H1 (cell line): ENCODE measurements at regions of chr1 and their contacts with region 1.

Region 1: DNA sequence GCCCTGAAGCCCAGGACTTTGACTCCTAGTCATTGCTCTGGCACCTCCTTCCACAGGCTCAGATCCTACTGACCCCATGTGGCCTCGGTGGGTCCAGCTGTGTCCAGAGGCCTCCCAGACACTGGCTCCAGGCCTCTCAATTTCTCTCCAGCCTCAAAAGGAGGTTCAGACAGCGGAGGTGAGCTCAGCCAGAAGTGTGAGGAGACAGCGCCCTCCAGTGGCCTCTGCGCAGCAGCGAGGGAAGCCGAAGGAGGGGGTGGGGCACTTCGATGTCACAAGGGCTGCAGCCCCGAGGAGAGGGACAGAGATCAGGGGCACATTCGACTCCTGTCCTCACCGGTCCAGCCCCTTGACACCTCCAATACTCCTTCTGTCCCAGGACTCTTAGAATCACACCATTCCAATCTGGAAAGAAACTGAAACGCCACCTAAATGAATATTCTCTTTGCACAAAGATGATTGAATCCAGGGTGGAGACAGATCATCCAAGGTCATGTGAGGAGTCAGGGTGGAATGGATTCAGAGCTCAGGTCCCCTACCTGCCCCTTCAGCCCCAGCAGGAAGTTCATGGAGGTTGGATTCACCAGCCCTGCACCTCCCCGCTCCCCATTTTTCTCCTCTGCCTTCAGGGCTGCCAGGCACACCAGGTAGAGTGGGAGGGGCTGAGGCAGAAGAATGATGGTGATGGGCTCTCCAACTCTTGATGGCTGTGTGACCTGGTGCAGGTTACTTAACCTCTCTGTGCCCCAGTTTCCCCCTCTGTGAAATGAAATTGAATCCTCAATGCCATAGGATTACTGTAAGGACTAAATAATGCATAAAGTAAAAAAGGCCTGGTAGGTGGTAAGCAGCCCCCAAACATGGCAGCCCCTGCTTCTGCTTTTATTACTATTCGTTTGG is 34.8 kb upstream of the ZBTB40 start:
- DNase-seq: peak; percentile 53 to 95
- H3K4me3 ChIP-seq: peak overlapping the region in 3 of 4 experiments; percentile 12 to 32 (median 26); a peak in 3 of 8 replicates
- H3K27ac ChIP-seq: no peak overlapping the region
- H3K4me1 ChIP-seq: peaks cover 3 to 12% (median 5%) of the 10 kb centered on the region in 4 experiments; a peak in 5 of 7 replicates
- H3K27me3 ChIP-seq: no peaks in the 10 kb centered on the region
- CTCF ChIP-seq: peak; percentile 91 to 99 (median 98)
- EP300 ChIP-seq: 0 out of 3 replicates have a peak, but pooled peaks of 1 of the 2 experiments have one; percentile 54
- POLR2A ChIP-seq: no peak
- RAD21 ChIP-seq: peak; percentile 98 to 100

Region 2: GRCh38 chr1:22105611-22106207 is 311.1 kb before region 1 on chr1:
- CTCF ChIA-PET with region 1: interaction called, 10 read pairs
- POLR2A ChIA-PET with region 1: no interaction called
- DNase-seq: no peak
- H3K4me3 ChIP-seq: no peak overlapping the region
- H3K27ac ChIP-seq: no peak overlapping the region
- H3K4me1 ChIP-seq: no peaks in the 10 kb centered on the region; a peak in 1 of 7 replicates
- H3K27me3 ChIP-seq: no peaks in the 10 kb centered on the region
- CTCF ChIP-seq: peak in 2 of 3 experiments; percentile 74 to 85; a peak in 3 of 4 replicates
- EP300 ChIP-seq: no peak
- POLR2A ChIP-seq: no peak
- RAD21 ChIP-seq: peak; percentile 84 to 89

Region 3: DNA sequence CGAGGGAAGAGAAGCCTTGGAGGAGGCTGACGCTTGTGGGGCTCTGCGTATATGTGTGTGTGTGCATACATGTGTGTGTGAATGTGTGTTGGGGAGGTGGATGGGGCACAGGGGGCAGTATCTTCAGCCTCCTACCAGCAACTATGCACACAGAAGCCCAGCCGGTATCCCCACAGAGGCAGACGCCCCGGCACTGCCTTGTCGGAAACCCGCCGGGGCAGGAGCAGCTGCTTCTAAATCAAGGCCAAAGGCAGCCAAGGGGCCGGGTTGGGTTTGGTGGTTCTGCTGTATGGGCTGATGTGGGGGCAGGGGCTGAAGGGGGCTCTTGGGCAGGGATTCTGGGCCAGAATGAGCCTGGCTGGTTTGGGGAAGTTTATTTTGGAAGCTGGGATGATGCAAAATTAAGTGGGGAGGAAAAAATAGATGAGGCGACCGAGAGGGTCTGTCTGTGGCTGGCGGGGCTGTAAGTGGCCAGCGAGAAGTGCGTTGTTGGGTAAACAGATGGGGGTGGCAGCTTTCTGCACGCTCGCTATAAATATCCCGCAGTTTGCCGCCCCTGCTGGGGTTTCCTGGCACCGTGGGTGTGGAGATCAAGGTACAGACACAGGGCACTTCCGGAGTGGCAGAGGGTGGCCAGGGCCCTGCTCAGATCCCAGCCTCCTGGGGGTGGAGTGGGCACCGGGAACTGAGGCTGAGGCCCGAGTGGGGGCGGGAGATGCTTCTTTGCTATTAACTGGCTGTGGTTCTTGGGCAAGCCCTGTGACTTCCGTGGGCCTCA is 263.0 kb before region 1 on chr1:
- CTCF ChIA-PET with region 1: interaction called, 11 read pairs
- POLR2A ChIA-PET with region 1: no interaction called
- DNase-seq: no peak
- H3K4me3 ChIP-seq: no peak overlapping the region
- H3K27ac ChIP-seq: no peak overlapping the region
- H3K4me1 ChIP-seq: no peaks in the 10 kb centered on the region
- H3K27me3 ChIP-seq: no peaks in the 10 kb centered on the region; a peak in 1 of 7 replicates
- CTCF ChIP-seq: no peak
- EP300 ChIP-seq: no peak
- POLR2A ChIP-seq: no peak
- RAD21 ChIP-seq: no peak

Region 4: GRCh38 chr1:22285549-22286396 is 131.0 kb before region 1 on chr1:
- CTCF ChIA-PET with region 1: interaction called, 12 read pairs
- POLR2A ChIA-PET with region 1: no interaction called
- DNase-seq: no peak
- H3K4me3 ChIP-seq: no peak overlapping the region
- H3K27ac ChIP-seq: no peak overlapping the region
- H3K4me1 ChIP-seq: peaks cover 0 to 5% (median 2%) of the 10 kb centered on the region in 4 experiments; a peak in 2 of 7 replicates
- H3K27me3 ChIP-seq: no peaks in the 10 kb centered on the region; a peak in 1 of 7 replicates
- CTCF ChIP-seq: no peak
- EP300 ChIP-seq: no peak
- POLR2A ChIP-seq: no peak
- RAD21 ChIP-seq: no peak

Region 5: GRCh38 chr1:22398656-22399420 is 18.0 kb before region 1 on chr1:
- CTCF ChIA-PET with region 1: interaction called, 14 read pairs
- POLR2A ChIA-PET with region 1: no interaction called
- DNase-seq: no peak
- H3K4me3 ChIP-seq: no peak overlapping the region
- H3K27ac ChIP-seq: no peak overlapping the region
- H3K4me1 ChIP-seq: peaks cover 0 to 9% (median 0%) of the 10 kb centered on the region in 4 experiments; a peak in 5 of 7 replicates
- H3K27me3 ChIP-seq: peaks cover 0 to 1% (median 0%) of the 10 kb centered on the region in 4 experiments; a peak in 1 of 7 replicates
- CTCF ChIP-seq: no peak
- EP300 ChIP-seq: no peak
- POLR2A ChIP-seq: no peak
- RAD21 ChIP-seq: no peak

Region 6: GRCh38 chr1:22436948-22437347 is 20.1 kb after region 1 on chr1:
- CTCF ChIA-PET with region 1: no interaction called
- POLR2A ChIA-PET with region 1: no interaction called
- DNase-seq: no peak
- H3K4me3 ChIP-seq: no peak overlapping the region
- H3K27ac ChIP-seq: no peak overlapping the region
- H3K4me1 ChIP-seq: no peaks in the 10 kb centered on the region; a peak in 1 of 7 replicates
- H3K27me3 ChIP-seq: no peaks in the 10 kb centered on the region
- CTCF ChIP-seq: no peak
- EP300 ChIP-seq: no peak
- POLR2A ChIP-seq: no peak
- RAD21 ChIP-seq: no peak

Region 7: GRCh38 chr1:22582661-22583635 is 166.1 kb after region 1 on chr1:
- CTCF ChIA-PET with region 1: no interaction called
- POLR2A ChIA-PET with region 1: no interaction called
- DNase-seq: no peak
- H3K4me3 ChIP-seq: no peak overlapping the region
- H3K27ac ChIP-seq: no peak overlapping the region
- H3K4me1 ChIP-seq: no peaks in the 10 kb centered on the region
- H3K27me3 ChIP-seq: no peaks in the 10 kb centered on the region
- CTCF ChIP-seq: no peak
- EP300 ChIP-seq: no peak
- POLR2A ChIP-seq: no peak
- RAD21 ChIP-seq: no peak

Region 8: DNA sequence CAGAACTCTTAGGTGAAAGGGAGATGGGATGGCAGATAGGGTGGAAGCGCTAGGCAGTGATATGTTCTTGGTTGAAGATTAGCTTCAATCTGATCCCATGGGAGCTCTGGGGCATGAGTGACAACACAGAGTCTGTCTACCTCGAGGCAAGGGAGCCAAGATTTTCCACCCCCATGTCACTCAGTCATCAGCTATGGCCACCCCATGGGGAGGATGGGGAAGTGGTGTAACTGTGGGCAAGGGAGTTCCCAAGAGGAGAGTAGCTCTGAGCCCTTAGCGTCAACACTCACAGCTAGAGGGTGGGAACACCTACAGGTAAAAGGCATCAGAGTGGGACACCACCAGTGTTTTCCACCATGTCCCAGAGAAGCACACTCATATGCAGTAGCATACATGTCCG is 189.4 kb after region 1 on chr1:
- CTCF ChIA-PET with region 1: no interaction called
- POLR2A ChIA-PET with region 1: no interaction called
- DNase-seq: no peak
- H3K4me3 ChIP-seq: no peak overlapping the region
- H3K27ac ChIP-seq: no peak overlapping the region
- H3K4me1 ChIP-seq: peaks cover 0 to 6% (median 3%) of the 10 kb centered on the region in 4 experiments
- H3K27me3 ChIP-seq: peaks cover 0 to 7% (median 0%) of the 10 kb centered on the region in 4 experiments; a peak in 1 of 7 replicates
- CTCF ChIP-seq: no peak
- EP300 ChIP-seq: no peak
- POLR2A ChIP-seq: no peak
- RAD21 ChIP-seq: no peak

Region 9: DNA sequence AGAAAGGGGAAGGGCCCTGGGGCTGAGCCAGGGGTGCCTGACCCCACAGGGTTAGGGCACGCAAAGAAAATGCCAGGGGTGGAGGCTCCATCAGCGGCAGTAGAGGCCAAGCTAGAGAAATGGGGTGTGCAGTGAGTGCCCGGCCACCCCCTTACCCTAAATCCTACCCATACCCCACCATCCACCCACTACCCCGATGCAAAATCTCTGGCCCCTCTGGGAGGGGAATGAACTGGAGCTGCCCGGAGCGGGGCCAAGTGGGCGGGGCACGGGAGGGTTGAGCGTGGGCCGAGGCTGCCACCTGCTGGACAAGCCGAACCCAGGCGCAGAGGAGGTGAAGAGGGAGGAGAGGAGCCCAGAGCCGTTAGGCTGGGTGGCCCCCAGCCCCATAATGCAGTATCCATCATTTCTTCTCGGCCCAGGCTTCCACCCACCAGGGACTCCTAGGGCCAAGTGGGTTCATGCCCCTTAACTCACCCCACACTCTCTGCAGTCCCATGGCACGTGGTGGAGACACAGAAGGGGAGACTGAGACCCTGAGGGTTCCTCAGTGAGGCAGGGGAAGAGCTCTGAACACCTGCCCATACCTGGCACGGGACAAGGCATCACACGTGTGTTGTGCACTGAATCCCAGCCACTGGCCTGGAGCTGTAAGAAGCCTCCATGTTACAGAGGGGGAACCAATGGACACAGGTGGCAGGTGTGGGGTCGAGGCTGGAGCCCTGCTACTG is 225.3 kb after region 1 on chr1:
- CTCF ChIA-PET with region 1: interaction called, 40 read pairs
- POLR2A ChIA-PET with region 1: interaction called, 4 read pairs
- DNase-seq: peak in 1 of 2 experiments; percentile 97
- H3K4me3 ChIP-seq: no peak overlapping the region
- H3K27ac ChIP-seq: no peak overlapping the region
- H3K4me1 ChIP-seq: peaks cover 0 to 6% (median 4%) of the 10 kb centered on the region in 4 experiments; a peak in 4 of 7 replicates
- H3K27me3 ChIP-seq: no peaks in the 10 kb centered on the region; a peak in 1 of 7 replicates
- CTCF ChIP-seq: peak; percentile 94 to 95 (median 94)
- EP300 ChIP-seq: no peak
- POLR2A ChIP-seq: no peak
- RAD21 ChIP-seq: peak; percentile 97 to 98